OCI-LY7 (cell line): ENCODE measurements at regions of chr10 and their contacts with region 1.

Region 1: GRCh38 chr10:75159519-75159918 is 48.1 kb downstream of the SAMD8 start:
- DNase-seq: no peak
- H3K4me3 ChIP-seq: no peak overlapping the region
- H3K27ac ChIP-seq: no peak overlapping the region
- H3K4me1 ChIP-seq: no peaks in the 10 kb centered on the region
- CTCF ChIP-seq: no peak

Region 2: DNA sequence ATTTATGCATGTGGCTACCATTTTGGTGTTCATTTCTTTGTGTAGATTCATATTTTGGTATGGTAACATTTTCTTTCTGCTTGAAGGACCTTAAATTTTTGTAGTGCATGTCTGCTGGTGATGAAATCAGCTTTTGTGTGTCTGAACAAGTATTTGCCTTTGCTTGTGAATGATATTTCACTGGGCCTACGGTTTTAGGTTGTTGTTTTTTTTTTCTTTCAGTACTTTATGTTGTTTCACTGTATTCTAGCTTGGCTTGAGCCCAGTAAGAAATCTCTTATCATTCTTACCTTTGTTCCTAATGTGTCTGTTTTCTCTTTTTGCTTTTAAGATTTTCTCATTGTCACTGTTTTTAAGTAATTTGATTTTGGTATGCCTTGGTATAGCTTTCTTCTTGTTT is 16.2 kb before region 1 on chr10:
- CTCF ChIA-PET with region 1: no interaction called
- POLR2A ChIA-PET with region 1: interaction called, 12 read pairs
- intact Hi-C with region 1: no loop called
- DNase-seq: no peak
- H3K4me3 ChIP-seq: no peak overlapping the region
- H3K27ac ChIP-seq: no peak overlapping the region
- H3K4me1 ChIP-seq: no peaks in the 10 kb centered on the region
- CTCF ChIP-seq: no peak

Region 3: DNA sequence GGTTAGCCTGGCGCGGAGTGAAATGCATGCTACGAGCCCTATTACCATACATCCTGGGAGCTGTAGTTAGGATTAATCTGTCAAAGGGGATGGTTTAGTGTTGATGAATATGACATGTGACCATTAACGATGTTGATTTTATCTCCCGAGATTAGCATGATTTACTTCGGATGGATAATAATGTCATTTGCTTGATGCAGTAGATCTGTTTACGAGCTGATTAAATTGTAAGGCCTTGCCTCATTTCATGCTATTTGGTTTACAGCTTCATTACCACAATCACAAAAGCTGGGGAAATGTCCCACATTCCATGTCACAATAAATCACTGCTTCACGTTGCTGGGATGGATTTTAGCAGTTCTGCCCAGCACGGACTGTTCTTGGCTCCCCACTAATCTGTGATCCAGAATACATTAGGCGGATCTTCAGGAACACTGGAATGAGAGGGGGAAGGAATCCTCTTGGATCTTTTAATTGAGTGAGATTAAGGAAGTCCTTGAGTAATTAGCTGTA is 219.7 kb after region 1 on chr10:
- CTCF ChIA-PET with region 1: no interaction called
- POLR2A ChIA-PET with region 1: no interaction called
- intact Hi-C with region 1: no loop called
- DNase-seq: no peak
- H3K4me3 ChIP-seq: no peak overlapping the region
- H3K27ac ChIP-seq: no peak overlapping the region
- H3K4me1 ChIP-seq: no peaks in the 10 kb centered on the region
- CTCF ChIP-seq: no peak